GM10248 (cell line): ENCODE measurements at regions of chr10 and their contacts with region 1.

Region 1: GRCh38 chr10:73810735-73811465 is 498 bp downstream of the NDST2 start:
- DNase-seq: peak; percentile 55
- CTCF ChIP-seq: no peak

Region 2: DNA sequence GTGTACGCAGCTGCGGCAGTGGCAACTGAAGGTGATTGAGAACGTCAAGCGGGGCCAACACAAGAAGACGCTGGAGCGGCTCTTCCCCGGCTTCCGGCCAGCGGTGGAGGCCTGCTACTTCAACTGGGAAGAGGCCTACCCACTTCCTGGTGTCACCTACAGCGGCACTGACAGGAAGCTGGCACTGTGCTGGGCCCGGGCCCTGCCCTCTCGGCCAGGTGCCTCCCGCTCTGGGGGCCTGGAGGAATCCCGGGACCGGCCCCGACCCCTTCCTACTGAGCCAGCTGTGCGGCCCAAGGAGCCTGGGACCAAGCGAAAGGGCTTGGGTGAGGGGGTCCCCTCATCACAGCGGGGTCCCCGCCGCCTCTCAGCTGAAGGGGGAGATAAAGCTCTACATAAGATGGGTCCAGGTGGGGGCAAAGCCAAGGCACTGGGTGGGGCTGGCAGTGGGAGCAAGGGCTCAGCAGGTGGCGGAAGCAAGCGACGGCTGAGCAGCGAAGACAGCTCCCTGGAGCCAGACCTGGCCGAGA is 19.0 kb before region 1 on chr10:
- CTCF ChIA-PET with region 1: interaction called, 13 read pairs
- POLR2A ChIA-PET with region 1: interaction called, 6 read pairs
- DNase-seq: no peak
- CTCF ChIP-seq: no peak

Region 3: DNA sequence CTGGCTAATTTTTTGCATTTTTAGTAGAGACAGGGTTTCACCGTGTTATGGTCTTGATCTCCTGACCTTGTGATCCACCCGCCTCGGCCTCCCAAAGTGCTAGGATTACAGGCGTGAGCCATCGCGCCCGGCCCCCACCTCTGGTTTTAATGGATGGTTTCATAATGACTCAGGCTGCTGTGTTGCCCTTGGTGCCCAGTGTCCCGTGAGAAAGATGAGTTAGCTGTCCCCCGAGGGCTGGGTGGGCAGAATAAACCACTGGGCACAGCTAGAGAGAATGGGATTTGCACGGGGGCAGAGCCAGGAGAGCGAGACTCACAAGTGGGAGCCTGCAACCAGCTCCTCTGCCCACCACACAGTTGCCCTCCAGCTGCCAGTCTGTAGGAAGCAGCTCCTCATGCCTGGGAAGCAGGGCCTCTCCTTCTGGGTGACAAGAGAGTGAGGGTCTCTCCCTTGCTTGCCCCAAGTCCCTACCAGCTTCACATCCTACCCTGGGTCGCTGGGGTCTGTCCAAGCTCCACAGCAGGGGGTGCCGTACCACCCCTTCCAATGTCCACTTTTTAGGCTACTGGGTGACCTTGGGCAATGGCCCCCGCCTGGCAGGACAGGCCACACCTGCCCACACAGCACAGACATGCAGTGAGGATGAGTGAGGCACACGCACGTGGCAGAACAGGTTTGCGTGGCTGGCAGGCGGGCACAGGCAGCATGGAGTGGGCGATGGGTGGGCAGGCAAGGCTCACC is 16.6 kb after region 1 on chr10:
- CTCF ChIA-PET with region 1: interaction called, 23 read pairs
- POLR2A ChIA-PET with region 1: no interaction called
- DNase-seq: no peak
- CTCF ChIP-seq: no peak